ENCODE measurements at regions of chr20 and their contacts with region 1.

Region 1: GRCh38 chr20:58209652-58210397 is 18.6 kb downstream of the ANKRD60 start:
- DNase-seq: peak; percentile 72 to 93 (median 86)
- ATAC-seq: peak; percentile 80
- H3K4me3 ChIP-seq: no peak overlapping the region
- H3K4me3 Mint-ChIP-seq: no peak overlapping the region
- H3K27ac ChIP-seq: no peak overlapping the region
- H3K27ac Mint-ChIP-seq: peak overlapping the region; percentile 51
- H3K4me1 ChIP-seq: peaks cover 9% of the 10 kb centered on the region
- H3K4me1 Mint-ChIP-seq: no peaks in the 10 kb centered on the region
- H3K27me3 ChIP-seq: peaks cover 0 to 9% of the 10 kb centered on the region in 2 experiments
- H3K27me3 Mint-ChIP-seq: peaks cover 4% of the 10 kb centered on the region
- CTCF ChIP-seq: peak; percentile 100

Region 2: DNA sequence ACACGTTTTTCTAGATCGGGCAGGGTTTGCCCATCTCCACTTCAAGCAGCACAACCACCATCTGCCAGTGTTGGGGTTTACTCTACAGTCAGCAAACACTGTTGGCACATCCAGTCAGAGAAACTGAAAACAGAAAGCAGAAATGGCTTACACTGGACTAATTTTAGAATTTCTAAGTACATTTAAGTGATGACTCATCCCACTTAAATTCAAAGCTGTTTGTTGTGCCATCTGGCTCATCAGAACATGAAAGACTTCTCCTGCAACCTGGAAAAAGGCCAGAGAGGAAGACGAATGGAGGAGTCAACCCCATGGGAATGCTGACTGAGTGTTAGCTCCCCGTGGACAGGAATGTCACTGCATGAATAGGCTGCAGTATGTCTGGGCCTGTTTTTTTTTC is 1655.0 kb before region 1 on chr20:
- CTCF ChIA-PET with region 1: no interaction called
- POLR2A ChIA-PET with region 1: no interaction called
- intact Hi-C with region 1: loop called in 1 of 2 experiments (anchors 2 kb)
- DNase-seq: peak in 3 of 14 experiments; percentile 16 to 29 (median 23)
- ATAC-seq: no peak
- H3K4me3 ChIP-seq: no peak overlapping the region
- H3K4me3 Mint-ChIP-seq: no peak overlapping the region
- H3K27ac ChIP-seq: no peak overlapping the region
- H3K27ac Mint-ChIP-seq: no peak overlapping the region
- H3K4me1 ChIP-seq: no peaks in the 10 kb centered on the region
- H3K4me1 Mint-ChIP-seq: no peaks in the 10 kb centered on the region
- H3K27me3 ChIP-seq: no peaks in the 10 kb centered on the region
- H3K27me3 Mint-ChIP-seq: no peaks in the 10 kb centered on the region
- CTCF ChIP-seq: no peak

Region 3: DNA sequence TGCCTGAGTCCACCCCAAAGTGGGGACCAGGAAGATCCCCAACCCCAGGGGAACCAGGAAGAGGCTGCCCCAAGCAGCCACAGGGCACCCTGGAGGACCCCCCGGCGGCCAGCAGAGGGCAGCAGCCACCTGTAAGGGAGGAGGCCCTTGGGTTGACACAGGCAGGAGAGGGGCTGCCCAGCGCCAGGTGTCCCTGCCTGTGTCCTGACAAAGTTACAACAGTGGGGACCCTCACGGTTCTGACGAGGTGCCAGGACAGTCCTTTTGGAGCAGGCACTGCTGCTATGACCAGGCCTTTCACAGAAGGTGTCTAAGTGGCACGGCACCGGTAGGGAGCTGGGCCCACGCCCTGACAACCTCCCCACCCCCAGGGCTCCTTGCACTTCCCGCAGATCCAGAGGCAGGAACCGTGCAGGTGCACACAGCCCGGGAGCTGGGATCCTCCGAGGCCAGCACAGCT is 1120.1 kb before region 1 on chr20:
- CTCF ChIA-PET with region 1: no interaction called
- POLR2A ChIA-PET with region 1: no interaction called
- intact Hi-C with region 1: loop called (anchors 2 to 5 kb)
- DNase-seq: peak; percentile 17 to 66 (median 44)
- ATAC-seq: peak; percentile 64
- H3K4me3 ChIP-seq: no peak overlapping the region
- H3K4me3 Mint-ChIP-seq: no peak overlapping the region
- H3K27ac ChIP-seq: no peak overlapping the region
- H3K27ac Mint-ChIP-seq: no peak overlapping the region
- H3K4me1 ChIP-seq: peaks cover 8% of the 10 kb centered on the region
- H3K4me1 Mint-ChIP-seq: peaks cover 13% of the 10 kb centered on the region
- H3K27me3 ChIP-seq: peaks cover 4% of the 10 kb centered on the region in 2 experiments
- H3K27me3 Mint-ChIP-seq: peaks cover 10% of the 10 kb centered on the region
- CTCF ChIP-seq: peak; percentile 62

Region 4: GRCh38 chr20:57514273-57514751 is 695.5 kb before region 1 on chr20:
- CTCF ChIA-PET with region 1: no interaction called
- POLR2A ChIA-PET with region 1: no interaction called
- intact Hi-C with region 1: loop called (anchors 1 to 2 kb)
- DNase-seq: peak in 7 of 14 experiments; percentile 5 to 63 (median 27)
- ATAC-seq: no peak
- H3K4me3 ChIP-seq: no peak overlapping the region
- H3K4me3 Mint-ChIP-seq: no peak overlapping the region
- H3K27ac ChIP-seq: no peak overlapping the region
- H3K27ac Mint-ChIP-seq: no peak overlapping the region
- H3K4me1 ChIP-seq: no peaks in the 10 kb centered on the region
- H3K4me1 Mint-ChIP-seq: no peaks in the 10 kb centered on the region
- H3K27me3 ChIP-seq: peaks cover 7 to 9% of the 10 kb centered on the region in 2 experiments
- H3K27me3 Mint-ChIP-seq: peaks cover 19% of the 10 kb centered on the region
- CTCF ChIP-seq: peak; percentile 51

Region 5: DNA sequence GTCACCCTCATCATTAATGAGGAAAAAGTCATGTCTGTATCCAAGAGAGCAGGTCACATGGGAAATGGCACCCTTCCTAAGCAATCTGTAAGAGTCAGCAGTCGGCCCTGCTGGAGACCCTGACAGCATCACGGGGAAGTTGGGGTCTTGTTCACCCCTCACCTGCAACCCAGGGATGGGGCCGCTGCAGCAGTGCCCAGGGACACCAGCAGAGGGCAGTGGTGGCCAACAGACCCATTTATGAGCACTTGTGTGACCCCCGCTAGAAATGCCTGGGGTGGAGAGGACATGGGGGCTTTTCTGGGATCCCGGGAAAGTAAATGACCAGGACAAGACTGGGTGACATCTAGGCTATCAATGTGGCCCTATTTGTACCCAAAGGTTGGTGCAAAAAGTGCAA is 17.3 kb before region 1 on chr20:
- CTCF ChIA-PET with region 1: interaction called, 3 read pairs
- POLR2A ChIA-PET with region 1: no interaction called
- intact Hi-C with region 1: loop called (anchors 2 kb)
- DNase-seq: peak in 11 of 14 experiments; percentile 14 to 52 (median 21)
- ATAC-seq: no peak
- H3K4me3 ChIP-seq: no peak overlapping the region
- H3K4me3 Mint-ChIP-seq: no peak overlapping the region
- H3K27ac ChIP-seq: no peak overlapping the region
- H3K27ac Mint-ChIP-seq: no peak overlapping the region
- H3K4me1 ChIP-seq: no peaks in the 10 kb centered on the region
- H3K4me1 Mint-ChIP-seq: no peaks in the 10 kb centered on the region
- H3K27me3 ChIP-seq: peaks cover 0 to 4% of the 10 kb centered on the region in 2 experiments
- H3K27me3 Mint-ChIP-seq: peaks cover 3% of the 10 kb centered on the region
- CTCF ChIP-seq: peak; percentile 66